ENCODE measurements at regions of chr2 and their contacts with region 1.

Region 1: DNA sequence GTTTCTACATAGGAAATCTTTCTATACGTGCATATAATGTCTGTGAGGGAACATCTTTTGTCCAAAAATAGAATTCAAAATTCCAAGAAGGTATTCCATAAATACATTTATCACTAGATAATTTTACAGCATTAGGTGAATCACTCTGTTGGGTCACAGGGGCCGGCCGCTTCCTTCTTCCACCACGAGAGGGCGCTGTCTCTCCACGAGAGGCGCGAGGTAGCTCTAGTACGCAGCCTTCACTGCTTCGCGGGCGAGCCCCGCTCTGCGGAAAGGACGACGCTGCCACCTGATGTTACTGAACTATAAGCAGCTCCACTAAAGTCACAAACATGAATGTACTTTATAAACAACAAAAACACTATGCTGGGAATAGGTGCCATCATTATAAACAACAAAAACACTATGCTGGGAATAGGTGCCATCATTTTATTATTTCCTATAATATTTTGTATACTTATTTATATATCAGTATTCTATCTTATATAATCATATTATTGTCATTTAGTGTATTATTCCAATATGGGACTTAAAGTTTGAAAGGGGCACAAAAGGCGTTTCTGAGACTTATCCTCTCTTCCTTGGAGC is 69.4 kb upstream of the REV1 start:
- DNase-seq: no peak
- H3K4me3 ChIP-seq: no peak overlapping the region
- CTCF ChIP-seq: peak; percentile 93

Region 2: DNA sequence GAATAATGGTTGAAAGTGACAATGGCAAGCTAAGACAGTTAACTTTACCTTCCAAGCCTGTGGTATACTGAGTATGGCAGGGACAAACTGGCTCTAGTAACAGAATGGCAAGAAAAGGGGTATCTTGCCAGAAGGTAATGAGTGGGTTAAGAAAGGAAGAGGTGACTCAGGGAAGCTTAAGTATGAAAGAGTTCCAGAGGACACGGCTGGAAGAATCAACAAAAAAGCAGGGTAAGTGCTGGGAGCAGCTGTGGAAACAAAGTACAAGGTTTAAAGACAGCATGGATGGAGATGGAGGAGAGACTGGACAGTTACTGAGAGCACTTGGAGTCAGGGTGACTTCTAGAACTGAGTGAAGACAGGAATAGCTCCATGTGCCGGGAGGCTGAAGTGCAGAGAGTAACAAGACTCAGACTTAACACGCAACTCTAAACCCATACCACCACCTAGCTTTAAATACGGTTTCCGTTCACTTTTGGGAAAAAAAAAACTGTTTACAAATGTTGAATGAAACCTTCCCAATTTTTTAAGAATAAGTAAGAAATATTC is 138.3 kb before region 1 on chr2:
- CTCF ChIA-PET with region 1: no interaction called
- POLR2A ChIA-PET with region 1: no interaction called
- DNase-seq: no peak
- H3K4me3 ChIP-seq: no peak overlapping the region
- CTCF ChIP-seq: no peak

Region 3: GRCh38 chr2:99572373-99573164 is 13.4 kb after region 1 on chr2:
- CTCF ChIA-PET with region 1: interaction called, 18 read pairs
- POLR2A ChIA-PET with region 1: interaction called, 3 read pairs
- DNase-seq: no peak
- H3K4me3 ChIP-seq: no peak overlapping the region
- CTCF ChIP-seq: no peak

Region 4: GRCh38 chr2:99708231-99708630 is 149.1 kb after region 1 on chr2:
- CTCF ChIA-PET with region 1: interaction called, 16 read pairs
- POLR2A ChIA-PET with region 1: no interaction called
- DNase-seq: no peak
- H3K4me3 ChIP-seq: no peak overlapping the region
- CTCF ChIP-seq: no peak

Region 5: DNA sequence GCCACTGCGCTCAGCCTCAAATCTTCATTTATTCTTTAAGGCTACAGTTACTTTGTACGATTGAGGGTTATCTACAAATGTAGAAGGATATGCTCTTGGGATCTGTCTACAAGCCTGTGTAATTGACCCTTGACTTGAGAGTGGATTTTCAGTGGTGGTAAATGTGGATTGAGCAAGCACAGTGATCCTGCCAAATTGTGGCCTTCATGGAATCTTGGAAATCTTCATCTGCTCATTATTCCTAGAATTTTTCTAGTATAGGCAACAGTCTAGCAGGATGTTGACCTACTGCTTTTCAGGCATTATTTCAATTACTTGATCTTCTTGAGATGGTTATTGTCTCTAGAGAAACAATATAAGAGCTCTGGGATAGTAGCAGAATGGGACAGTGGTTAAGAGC is 156.8 kb after region 1 on chr2:
- CTCF ChIA-PET with region 1: interaction called, 16 read pairs
- POLR2A ChIA-PET with region 1: no interaction called
- DNase-seq: no peak
- H3K4me3 ChIP-seq: no peak overlapping the region
- CTCF ChIP-seq: no peak

Region 6: GRCh38 chr2:100246163-100247145 is 687.3 kb after region 1 on chr2:
- CTCF ChIA-PET with region 1: interaction called, 22 read pairs
- POLR2A ChIA-PET with region 1: interaction called, 4 read pairs
- DNase-seq: no peak
- H3K4me3 ChIP-seq: no peak overlapping the region
- CTCF ChIP-seq: peak; percentile 14

Measured in AG04449 (cell line).